Sciatic nerve (tissue), 2 donors: ENCODE measurements at regions of chr6 and their contacts with region 1.

Region 1: DNA sequence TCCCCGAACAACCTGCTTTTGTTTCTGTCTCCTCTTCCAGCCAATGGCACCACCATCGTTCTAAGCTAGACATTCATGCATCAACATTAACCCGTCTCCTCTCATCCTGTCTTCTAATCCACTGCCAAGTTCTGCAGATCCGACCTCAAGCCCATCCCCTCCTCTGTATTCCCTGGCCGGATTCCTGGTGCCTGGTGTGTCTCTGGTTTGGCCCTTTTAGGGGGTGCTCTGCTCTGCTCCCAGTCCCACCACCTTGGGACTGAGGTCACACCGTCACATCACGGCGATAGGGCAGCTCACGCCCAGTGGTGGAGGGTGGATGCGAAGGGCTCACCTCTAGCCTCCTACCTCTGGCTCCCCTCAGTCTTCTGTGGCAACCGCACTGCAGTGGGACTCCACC is 102.5 kb upstream of the AGPAT4 start:
- DNase-seq: no peak
- ATAC-seq: no peak

Region 2: DNA sequence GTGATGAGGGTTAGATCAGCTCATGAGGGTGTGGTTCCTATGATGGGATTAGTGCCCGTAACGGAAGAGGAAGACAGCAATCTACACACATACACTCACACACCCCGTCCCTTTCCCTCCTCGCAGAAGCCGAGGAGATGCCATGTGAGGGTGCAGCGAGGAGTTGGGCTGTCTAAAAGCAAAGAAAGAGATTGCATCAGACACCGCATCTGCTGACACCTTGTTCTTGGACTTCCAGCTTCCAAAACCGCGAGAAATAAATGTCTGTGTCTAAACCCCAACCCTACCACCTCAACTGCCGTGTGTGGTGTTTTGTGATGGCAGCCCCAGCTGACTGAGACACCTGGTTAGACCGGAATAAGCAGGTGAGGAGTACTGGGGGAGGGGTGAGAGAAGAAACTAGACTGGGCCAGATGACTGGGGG is 449.5 kb before region 1 on chr6:
- intact Hi-C with region 1: loop called (anchors 2 kb)
- DNase-seq: no peak
- ATAC-seq: no peak

Region 3: GRCh38 chr6:161393839-161394364 is 17.5 kb after region 1 on chr6:
- intact Hi-C with region 1: no loop called
- DNase-seq: no peak
- ATAC-seq: peak; percentile 95

Region 4: GRCh38 chr6:161418463-161418945 is 42.1 kb after region 1 on chr6:
- intact Hi-C with region 1: no loop called
- DNase-seq: no peak
- ATAC-seq: peak; percentile 89